ENCODE measurements at regions of chr6 and their contacts with region 1.

Region 1: DNA sequence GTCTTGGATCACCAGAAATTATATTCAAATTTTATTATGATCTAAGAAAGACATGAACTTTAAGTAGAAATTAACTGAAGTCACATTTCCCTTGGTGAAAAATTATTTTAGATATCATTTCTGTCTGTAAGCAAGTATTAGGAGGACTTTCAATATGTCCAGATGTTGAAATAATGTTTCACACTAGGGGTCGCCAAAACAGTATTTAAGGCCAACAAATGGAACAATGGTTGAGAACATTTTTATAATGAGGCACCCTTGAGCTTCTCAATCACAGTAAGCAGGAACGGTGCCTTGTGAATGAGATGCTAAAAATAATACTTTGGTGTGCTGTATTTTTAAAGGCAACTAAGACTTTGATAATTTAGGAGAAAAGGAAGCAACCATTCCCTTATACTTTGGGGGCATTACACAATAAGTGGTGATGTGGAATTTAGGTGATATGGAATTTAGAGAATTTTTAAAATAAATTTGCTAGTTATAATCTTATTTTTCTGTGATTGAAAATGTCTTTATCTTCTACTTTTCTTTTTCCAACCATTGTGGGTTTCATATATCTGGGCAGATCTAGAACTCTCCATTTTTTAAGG is 9.6 kb upstream of the SF3B5 start:
- DNase-seq: no peak
- H3K4me3 ChIP-seq: no peak overlapping the region
- H3K27ac ChIP-seq: no peak overlapping the region
- H3K4me1 ChIP-seq: no peaks in the 10 kb centered on the region
- H3K27me3 ChIP-seq: no peaks in the 10 kb centered on the region
- CTCF ChIP-seq: peak; percentile 56 to 72 (median 63)
- EP300 ChIP-seq: no peak
- POLR2A ChIP-seq: no peak

Region 2: DNA sequence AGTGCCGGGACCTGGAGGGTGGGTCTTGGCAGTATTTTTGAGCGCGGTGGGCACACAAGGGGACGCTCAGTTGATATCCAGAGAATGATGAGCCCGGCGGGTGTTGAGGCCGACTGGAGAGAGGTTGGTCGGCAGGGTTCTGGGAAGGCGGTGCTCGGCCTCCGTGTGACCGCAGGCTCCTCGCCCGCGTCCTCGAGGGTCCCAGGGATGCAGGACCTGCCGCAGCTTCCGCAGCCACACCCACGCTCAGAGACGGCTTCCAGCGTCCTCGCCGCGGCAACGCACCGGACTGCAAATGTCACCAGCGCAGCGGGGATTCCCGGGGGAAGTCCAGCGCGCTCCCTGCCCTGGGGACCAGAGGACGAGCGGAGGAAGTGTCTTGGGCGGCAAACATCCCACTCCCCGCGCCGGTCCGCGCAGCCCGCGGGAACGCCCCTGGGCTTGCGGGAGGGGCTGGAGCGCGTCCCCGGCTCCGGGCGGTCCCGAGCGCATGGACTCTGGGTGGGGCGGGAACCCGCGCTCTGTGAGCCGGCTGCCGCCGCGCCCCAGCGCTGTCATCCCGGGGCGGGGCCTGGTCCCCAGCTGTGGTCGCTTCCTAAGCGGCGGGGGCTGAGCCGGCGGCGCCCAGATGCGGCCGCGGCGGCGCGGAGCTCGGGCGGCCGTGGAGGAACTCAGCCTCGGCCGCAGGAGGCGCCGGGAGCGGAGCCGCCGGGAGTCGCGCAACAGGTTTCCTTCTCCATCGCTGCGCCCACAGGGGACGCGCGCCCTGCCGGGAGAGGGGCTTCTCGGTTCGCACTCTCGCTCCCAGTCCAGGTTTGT is 45.1 kb after region 1 on chr6 and contains the start of gene STX11:
- in situ Hi-C with region 1: no loop called
- intact Hi-C with region 1: loop called (anchors 1 kb)
- DNase-seq: peak; percentile 76
- H3K4me3 ChIP-seq: peak within 1 kb of the TSS; percentile 37 to 71 (median 66)
- H3K27ac ChIP-seq: peak within 1 kb of the TSS; percentile 61 to 72 (median 70)
- H3K4me1 ChIP-seq: peaks cover 0 to 20% (median 13%) of the 10 kb centered on the region in 4 donors
- H3K27me3 ChIP-seq: peaks cover 25% of the 10 kb centered on the region
- CTCF ChIP-seq: no peak
- EP300 ChIP-seq: no peak
- POLR2A ChIP-seq: no peak
- total RNA-seq, gene STX11: 1.8 to 3.0 (median 2.3) TPM in 3 of 4 donors, not detected in the other

Region 3: DNA sequence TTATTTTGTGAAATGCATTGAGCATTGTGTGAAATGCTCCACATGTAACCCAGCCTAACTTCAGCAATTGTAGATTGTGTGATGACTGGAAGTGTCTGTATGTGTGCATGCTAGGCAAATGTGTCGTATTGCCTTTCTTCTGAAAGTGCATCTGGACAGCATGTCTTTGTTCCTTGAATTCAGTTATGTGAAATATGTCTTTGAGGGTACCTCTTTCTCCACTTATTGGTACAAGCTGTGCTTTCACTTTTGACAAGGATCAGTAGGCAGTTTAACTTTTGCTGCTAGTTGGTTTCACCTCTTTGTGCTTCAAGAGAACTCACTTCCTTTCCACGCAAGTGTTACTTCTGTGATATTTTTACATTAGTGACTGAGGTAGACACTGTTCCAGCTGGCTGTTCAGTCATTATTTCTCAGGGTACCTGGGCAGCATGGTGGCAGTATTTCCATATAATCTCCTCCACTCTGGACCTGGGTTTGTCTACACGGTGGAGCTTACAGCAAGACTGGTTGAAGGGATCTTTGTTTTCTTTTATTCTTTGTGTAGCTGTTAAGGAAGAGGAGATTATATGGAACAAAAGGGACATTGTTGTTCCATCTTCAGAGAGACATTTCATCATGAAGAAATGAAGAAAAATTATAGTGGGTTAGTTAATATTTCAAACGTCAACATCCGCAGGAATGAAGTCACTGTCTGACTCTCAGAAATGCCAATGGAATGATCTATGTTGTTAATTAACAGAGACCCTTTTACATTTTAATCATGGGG is 355.5 kb after region 1 on chr6:
- in situ Hi-C with region 1: loop called in 1 of 4 experiments (anchors 10 kb)
- intact Hi-C with region 1: no loop called
- DNase-seq: no peak
- H3K4me3 ChIP-seq: no peak overlapping the region
- H3K27ac ChIP-seq: no peak overlapping the region
- H3K4me1 ChIP-seq: no peaks in the 10 kb centered on the region
- H3K27me3 ChIP-seq: no peaks in the 10 kb centered on the region
- CTCF ChIP-seq: no peak
- EP300 ChIP-seq: no peak
- POLR2A ChIP-seq: no peak

Region 4: GRCh38 chr6:144482142-144482541 is 377.1 kb after region 1 on chr6:
- in situ Hi-C with region 1: loop called in 3 of 4 experiments (anchors 5 to 25 kb)
- intact Hi-C with region 1: no loop called
- DNase-seq: peak; percentile 81
- H3K4me3 ChIP-seq: no peak overlapping the region
- H3K27ac ChIP-seq: no peak overlapping the region
- H3K4me1 ChIP-seq: no peaks in the 10 kb centered on the region
- H3K27me3 ChIP-seq: no peaks in the 10 kb centered on the region
- CTCF ChIP-seq: peak; percentile 59 to 69 (median 61)
- EP300 ChIP-seq: no peak
- POLR2A ChIP-seq: no peak

Measured in transverse colon (tissue), 4 donors.